ENCODE measurements at regions of chr1 and their contacts with region 1.

Region 1: DNA sequence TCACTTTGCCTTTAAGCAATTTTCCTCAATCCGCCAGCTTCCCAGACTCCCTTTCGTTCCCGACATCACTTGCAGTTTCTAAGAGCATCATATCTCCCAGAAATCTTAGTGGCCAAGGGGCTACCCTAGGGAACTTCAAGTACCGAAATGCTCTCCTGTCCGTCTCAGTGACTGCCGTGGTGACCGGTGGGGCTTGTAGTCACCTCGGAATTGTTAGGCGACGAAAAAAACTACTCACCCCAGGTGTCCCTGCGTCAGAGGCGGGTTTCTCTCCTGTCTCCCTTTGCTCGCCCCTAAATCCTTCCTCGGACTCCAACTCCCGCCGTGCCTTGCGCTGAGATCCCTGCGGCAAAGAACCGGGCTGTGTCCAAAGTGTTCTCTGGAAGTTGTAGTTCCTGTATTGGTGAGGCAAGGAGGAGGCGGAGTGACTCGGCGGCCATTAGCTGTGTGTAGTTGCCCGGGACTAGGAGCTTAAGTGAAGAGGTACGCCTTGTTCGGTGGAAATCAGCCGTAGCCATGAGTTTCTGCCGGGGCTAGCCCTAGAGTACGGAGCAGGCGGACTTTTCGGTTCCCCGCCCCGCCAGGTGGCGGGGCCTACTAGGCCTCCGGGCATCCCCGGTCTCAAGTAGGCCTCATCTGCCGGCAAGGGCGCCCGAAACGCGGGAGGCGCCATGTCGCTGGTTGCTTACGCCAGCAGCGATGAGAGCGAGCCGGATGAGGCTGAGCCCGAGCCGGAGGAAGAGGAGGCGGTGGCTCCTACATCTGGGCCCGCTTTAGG is at the start of gene PRCC:
- DNase-seq: peak; percentile 90 to 100
- ATAC-seq: peak; percentile 97
- H3K4me3 ChIP-seq: peak within 1 kb of the TSS; percentile 83
- H3K27ac ChIP-seq: peak within 1 kb of the TSS; percentile 91 to 94
- H3K4me1 ChIP-seq: peaks cover 24% of the 10 kb centered on the region
- CTCF ChIP-seq: no peak
- EP300 ChIP-seq: no peak
- POLR2A ChIP-seq: peak; percentile 22
- RAD21 ChIP-seq: no peak
- polyA plus RNA-seq, gene PRCC: 52.0 and 65.3 TPM in 2 replicates

Region 2: GRCh38 chr1:156601122-156601830 is 166.0 kb before region 1 on chr1 and contains the start of gene GPATCH4:
- CTCF ChIA-PET with region 1: no interaction called
- POLR2A ChIA-PET with region 1: no interaction called
- DNase-seq: peak; percentile 89 to 92
- ATAC-seq: peak; percentile 86 to 87
- H3K4me3 ChIP-seq: peak within 1 kb of the TSS; percentile 77
- H3K27ac ChIP-seq: peak within 1 kb of the TSS; percentile 86 to 94
- H3K4me1 ChIP-seq: peaks cover 19% of the 10 kb centered on the region
- CTCF ChIP-seq: no peak
- EP300 ChIP-seq: no peak
- POLR2A ChIP-seq: peak; percentile 87
- RAD21 ChIP-seq: no peak
- polyA plus RNA-seq, gene GPATCH4: 68.1 and 76.1 TPM in 2 replicates

Region 3: DNA sequence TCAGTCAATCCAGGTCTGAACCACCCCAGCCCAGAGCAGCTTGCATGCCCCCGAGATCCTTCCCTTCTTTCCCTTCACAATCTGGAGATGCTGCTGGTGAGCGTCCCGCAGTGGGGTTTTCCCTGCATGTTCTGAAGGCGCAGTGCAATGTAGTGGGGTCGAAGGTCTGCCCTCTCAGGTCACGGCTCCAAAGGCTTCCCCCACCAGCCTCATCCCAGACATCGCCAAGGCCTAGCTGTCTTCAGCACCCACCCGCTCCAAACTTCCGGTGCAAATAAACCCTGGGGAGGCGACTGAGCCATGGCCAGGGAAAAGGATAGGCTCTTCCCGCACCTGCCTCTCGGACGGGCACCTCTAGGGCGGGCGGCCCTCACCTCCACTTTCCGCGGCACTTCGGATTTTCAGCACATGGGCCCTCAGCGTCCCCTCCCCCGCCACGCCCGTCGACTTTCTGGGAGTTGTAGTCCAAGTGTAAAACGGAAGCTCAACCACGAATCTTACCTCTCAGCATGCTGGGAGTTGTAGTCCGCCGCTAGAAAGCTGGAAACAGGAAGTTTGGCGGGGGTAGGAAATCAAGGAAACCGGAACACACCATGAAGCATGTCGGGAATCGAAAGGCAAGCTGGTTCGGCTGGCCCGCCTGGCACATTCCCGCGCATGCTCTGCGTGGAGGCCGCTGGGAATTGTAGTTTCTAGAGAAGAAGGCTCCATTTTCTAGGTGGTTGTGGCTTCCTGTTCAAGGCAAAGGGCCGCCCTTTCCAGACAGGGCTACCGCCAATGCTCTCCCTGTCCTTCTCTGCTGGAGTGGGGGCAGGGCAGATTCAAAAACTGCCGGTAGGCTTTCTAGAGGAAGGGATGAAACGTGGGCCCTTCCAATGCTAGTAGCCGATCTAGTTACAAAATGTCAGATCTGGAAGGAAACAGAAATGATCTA is 26.3 kb before region 1 on chr1 and contains the start of gene MRPL24:
- CTCF ChIA-PET with region 1: interaction called, 6 read pairs
- POLR2A ChIA-PET with region 1: interaction called, 44 read pairs
- DNase-seq: peak; percentile 97 to 100
- ATAC-seq: peak; percentile 92 to 93
- H3K4me3 ChIP-seq: peak within 1 kb of the TSS; percentile 66
- H3K27ac ChIP-seq: peak within 1 kb of the TSS; percentile 88 to 94
- H3K4me1 ChIP-seq: peaks cover 30% of the 10 kb centered on the region
- CTCF ChIP-seq: no peak
- EP300 ChIP-seq: no peak
- POLR2A ChIP-seq: peak; percentile 57
- RAD21 ChIP-seq: no peak
- polyA plus RNA-seq, gene MRPL24: 170 and 246 TPM in 2 replicates

Region 4: DNA sequence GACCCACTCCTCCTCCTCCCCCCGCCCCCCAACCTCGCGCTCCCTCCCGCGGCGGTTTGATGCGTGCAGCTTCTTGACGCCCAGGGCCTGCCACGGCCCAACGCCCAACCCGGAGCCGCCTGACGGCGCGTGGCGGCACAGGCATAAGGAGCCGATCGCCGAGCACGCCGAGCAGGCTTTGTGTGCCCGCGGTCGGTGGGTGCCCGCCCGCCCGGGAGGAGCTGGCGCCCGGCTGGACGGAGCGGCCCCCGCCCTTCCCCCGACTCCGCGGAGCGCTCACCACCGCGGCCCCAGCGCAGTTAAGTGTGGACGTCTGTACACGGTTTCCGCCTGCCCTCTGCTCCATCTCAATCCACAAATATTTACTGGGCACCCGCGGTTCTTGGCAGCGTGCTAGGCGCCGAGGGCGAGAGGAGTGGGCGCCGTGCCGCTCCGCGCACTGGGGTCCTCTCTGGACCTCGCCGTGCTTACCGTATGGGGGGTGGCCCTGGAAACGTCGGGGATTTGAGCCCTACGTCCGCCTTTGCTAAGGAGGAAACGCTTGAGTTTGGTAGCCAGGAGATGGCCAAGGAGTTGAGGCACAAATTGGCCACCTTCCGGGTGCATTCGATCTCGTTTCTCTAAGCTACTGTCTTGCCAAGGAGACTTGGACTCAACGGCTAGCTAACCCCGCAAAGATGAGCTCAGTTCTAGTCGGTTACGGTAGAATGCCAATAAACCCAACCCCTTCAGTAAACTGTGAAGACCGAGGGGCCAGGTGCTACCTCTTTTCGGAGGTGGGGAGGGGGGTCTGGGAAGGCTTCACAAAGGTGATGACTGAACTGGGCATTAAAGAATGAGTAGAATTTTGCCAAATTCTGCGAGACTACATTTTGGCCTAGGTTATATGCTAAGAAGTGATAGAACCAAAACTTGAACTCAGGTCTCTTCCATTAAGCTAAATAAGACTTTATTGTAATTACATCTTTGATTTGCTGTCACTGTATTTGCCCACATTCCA is 15.2 kb before region 1 on chr1:
- CTCF ChIA-PET with region 1: interaction called, 15 read pairs
- POLR2A ChIA-PET with region 1: interaction called, 22 read pairs
- DNase-seq: peak; percentile 83 to 96
- ATAC-seq: peak; percentile 59 to 67
- H3K4me3 ChIP-seq: peak overlapping the region; percentile 92
- H3K27ac ChIP-seq: peak overlapping the region; percentile 99 to 100
- H3K4me1 ChIP-seq: peaks cover 31% of the 10 kb centered on the region
- CTCF ChIP-seq: no peak
- EP300 ChIP-seq: no peak
- POLR2A ChIP-seq: peak; percentile 51; the same call in 1 of the 2 replicates
- RAD21 ChIP-seq: 0 out of 5 replicates have a peak, but pooled peaks have one; percentile 7 to 27